ENCODE measurements at regions of chr1 and their contacts with region 1.

Region 1: DNA sequence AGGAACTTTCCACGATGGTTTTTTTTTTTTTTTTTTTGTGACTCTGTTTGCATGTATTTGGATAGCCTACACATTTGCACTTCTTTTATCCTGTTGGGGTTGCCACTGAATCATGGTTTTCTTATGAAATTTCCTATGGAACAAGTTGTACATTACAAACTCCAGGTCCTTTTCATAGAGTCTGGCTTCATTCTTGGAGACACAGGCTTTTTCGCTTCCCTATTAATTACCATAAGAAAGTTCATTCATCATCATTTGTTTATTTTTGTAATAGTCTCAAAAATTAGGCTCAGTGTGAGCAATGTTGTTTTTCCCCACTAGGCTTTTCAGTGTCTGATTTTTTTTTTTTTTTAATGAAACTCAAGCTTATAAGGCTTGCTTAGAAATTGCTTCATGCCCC is 179.4 kb downstream of the FMN2 start:
- DNase-seq: no peak
- ATAC-seq: no peak
- H3K4me3 ChIP-seq: no peak overlapping the region
- H3K27ac ChIP-seq: no peak overlapping the region
- H3K4me1 ChIP-seq: no peaks in the 10 kb centered on the region
- H3K27me3 ChIP-seq: no peaks in the 10 kb centered on the region
- CTCF ChIP-seq: no peak
- POLR2A ChIP-seq: no peak
- RAD21 ChIP-seq: no peak

Region 2: GRCh38 chr1:240199758-240200645 is 71.1 kb before region 1 on chr1:
- CTCF ChIA-PET with region 1: no interaction called
- POLR2A ChIA-PET with region 1: no interaction called
- dilution Hi-C with region 1: no loop called
- in situ Hi-C with region 1: no loop called
- intact Hi-C with region 1: loop called (anchors 2 kb)
- DNase-seq: no peak
- ATAC-seq: peak; percentile 29
- H3K4me3 ChIP-seq: no peak overlapping the region
- H3K27ac ChIP-seq: peak overlapping the region; percentile 35; the same call in 1 of the 2 replicates
- H3K4me1 ChIP-seq: peaks cover 2% of the 10 kb centered on the region; the same call in 1 of the 2 replicates
- H3K27me3 ChIP-seq: no peaks in the 10 kb centered on the region
- CTCF ChIP-seq: no peak
- POLR2A ChIP-seq: no peak
- RAD21 ChIP-seq: no peak

Measured in IMR-90 (cell line).